WTC11 (cell line): ENCODE measurements at regions of chr16 and their contacts with region 1.

Region 1: GRCh38 chr16:53530046-53530445 is 27.0 kb upstream of the AKTIP start:
- DNase-seq: no peak
- ATAC-seq: no peak
- H3K4me3 Mint-ChIP-seq: no peak overlapping the region
- H3K27ac Mint-ChIP-seq: no peak overlapping the region
- H3K4me1 Mint-ChIP-seq: no peaks in the 10 kb centered on the region
- H3K27me3 Mint-ChIP-seq: no peaks in the 10 kb centered on the region
- CTCF ChIP-seq: no peak

Region 2: GRCh38 chr16:53755536-53755910 is 225.5 kb after region 1 on chr16:
- CTCF ChIA-PET with region 1: no interaction called
- POLR2A ChIA-PET with region 1: interaction called, 11 read pairs
- DNase-seq: no peak
- ATAC-seq: no peak
- H3K4me3 Mint-ChIP-seq: no peak overlapping the region
- H3K27ac Mint-ChIP-seq: no peak overlapping the region
- H3K4me1 Mint-ChIP-seq: peaks cover 16% of the 10 kb centered on the region
- H3K27me3 Mint-ChIP-seq: no peaks in the 10 kb centered on the region; the same call in 1 of the 2 replicates
- CTCF ChIP-seq: no peak